Dorsolateral prefrontal cortex (tissue), 120 donors: ENCODE measurements at regions of chr15 and their contacts with region 1.

Region 1: GRCh38 chr15:88246666-88247446 is 9.7 kb downstream of the NTRK3 start:
- DNase-seq: peak; percentile 66 to 88 (median 78)
- H3K4me3 ChIP-seq: peak overlapping the region in 54 of 59 donors; percentile 6 to 57 (median 38)
- H3K27ac ChIP-seq: peak overlapping the region in 21 of 59 donors; percentile 5 to 66 (median 46)
- H3K27me3 ChIP-seq: no peaks in the 10 kb centered on the region
- CTCF ChIP-seq: peak; percentile 89 to 99 (median 97)

Region 2: DNA sequence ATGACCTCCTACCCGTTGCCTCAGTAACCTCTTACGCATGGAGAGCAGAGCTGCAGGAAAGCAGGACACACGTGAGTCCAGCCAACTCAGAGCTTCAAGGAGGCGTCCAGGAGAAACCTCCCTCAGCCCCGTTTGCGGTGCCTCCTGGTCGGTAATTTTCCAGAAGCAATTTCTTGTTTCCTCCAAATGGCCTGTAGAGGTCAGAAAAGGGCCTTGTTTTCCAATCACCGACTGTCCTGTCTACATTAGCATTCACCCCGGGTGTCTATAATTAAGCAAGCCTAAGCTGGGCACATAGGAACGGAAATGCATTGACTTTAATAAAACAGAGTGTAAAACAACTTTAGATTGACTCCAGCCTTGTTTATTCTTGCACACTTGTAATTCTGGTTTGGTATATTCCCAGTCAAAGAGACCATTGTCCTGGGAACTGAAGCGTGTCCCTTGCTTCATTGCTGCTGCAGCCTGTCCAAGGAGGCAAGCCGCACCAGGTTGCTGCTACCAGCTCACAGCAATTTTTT is 1331.0 kb before region 1 on chr15:
- intact Hi-C with region 1: loop called (anchors 5 to 10 kb)
- DNase-seq: peak in 8 of 10 donors; percentile 33 to 59 (median 42)
- H3K4me3 ChIP-seq: peak overlapping the region in 25 of 59 donors; percentile 0 to 49 (median 18)
- H3K27ac ChIP-seq: peak overlapping the region; percentile 51 to 97 (median 91)
- H3K27me3 ChIP-seq: no peaks in the 10 kb centered on the region
- CTCF ChIP-seq: peak in 55 of 56 donors; percentile 55 to 84 (median 71)

Region 3: DNA sequence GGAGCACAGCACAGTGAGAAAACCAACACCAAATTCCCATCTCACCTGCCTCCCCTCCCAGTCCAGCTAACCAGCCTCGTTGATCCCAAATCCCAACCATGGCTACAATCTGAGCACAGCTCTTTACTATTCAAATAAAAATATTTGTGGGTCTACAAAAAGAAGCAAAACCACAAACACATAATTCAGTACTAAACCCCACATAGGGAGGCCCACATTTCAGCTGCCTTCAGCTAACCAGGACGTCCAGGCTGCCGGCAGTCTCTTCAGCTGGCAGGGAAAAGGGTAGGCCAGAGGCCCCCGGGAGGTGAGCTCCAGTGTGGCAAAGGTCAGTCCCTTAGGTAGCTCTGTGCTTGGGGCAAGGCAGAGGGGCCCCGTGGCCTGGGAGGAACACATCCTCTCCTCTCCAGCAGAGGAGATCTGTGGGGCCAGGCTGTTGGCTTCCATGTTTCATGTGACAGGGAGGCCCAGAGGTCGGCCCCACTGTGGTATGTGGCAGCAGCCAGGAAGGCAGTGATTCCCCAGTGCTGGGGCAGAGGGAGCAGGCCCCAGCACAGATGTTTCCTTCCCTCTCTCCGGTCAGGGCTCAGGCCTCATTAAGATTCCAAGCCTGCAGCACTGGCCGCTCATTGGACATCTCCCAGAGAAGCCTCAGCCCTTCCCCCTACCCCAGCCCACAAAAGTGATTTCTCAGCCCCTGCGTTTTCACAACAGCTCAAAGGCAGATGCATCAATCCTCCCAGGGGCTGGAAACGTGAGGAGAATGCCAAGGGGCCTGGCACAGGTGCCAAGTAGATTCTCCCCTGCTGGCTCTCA is 371.8 kb before region 1 on chr15:
- intact Hi-C with region 1: loop called in 1 of 2 experiments (anchors 10 kb)
- DNase-seq: peak in 8 of 10 donors; percentile 12 to 53 (median 45)
- H3K4me3 ChIP-seq: no peak overlapping the region
- H3K27ac ChIP-seq: peak overlapping the region in 8 of 59 donors; percentile 7 to 59 (median 32)
- H3K27me3 ChIP-seq: no peaks in the 10 kb centered on the region
- CTCF ChIP-seq: no peak

Region 4: DNA sequence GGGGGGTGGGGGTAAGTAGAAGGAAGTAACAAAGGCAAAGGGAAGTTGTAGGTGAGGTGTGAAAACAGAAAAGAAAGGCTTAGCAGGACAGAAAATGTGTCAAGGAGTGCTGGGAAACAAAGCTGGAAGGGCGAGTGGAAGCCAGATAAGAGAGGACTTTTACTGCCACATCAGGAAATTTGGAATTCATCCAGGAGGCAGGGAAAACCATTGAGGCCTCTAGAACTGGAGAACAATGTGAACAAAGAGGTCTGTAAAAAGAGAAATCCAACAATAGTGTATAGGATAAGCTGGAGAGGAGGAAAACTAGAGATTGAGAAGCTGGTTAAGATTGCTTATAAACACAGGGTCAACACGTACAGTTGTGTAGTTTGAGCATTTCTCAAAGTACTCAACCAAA is 106.9 kb before region 1 on chr15:
- intact Hi-C with region 1: loop called in 1 of 2 experiments (anchors 10 kb)
- DNase-seq: no peak
- H3K4me3 ChIP-seq: no peak overlapping the region
- H3K27ac ChIP-seq: peak overlapping the region in 2 of 59 donors; percentile 11 to 22
- H3K27me3 ChIP-seq: no peaks in the 10 kb centered on the region
- CTCF ChIP-seq: no peak

Region 5: DNA sequence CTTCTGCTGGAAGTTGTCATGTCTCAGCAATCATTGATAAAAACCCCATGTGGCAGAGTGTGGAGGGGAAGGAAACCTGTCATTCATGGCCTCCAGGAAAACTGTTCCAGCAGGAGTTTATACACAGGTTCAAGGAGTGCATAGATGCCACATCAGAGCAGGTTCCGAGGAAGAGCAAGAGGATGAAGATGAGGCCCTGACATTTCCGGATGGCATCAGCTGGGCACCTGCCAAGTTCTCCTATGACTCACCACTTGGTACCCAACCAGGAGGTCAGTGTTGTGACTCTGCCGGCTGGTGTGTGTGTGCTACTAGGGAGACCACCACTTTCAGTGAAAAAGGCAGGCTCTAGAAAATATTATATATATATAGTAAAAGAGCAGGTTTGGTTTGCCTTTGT is 59.7 kb before region 1 on chr15:
- intact Hi-C with region 1: no loop called
- DNase-seq: peak in 6 of 10 donors; percentile 33 to 72 (median 48)
- H3K4me3 ChIP-seq: no peak overlapping the region
- H3K27ac ChIP-seq: peak overlapping the region in 1 of 59 donors; percentile 3
- H3K27me3 ChIP-seq: no peaks in the 10 kb centered on the region
- CTCF ChIP-seq: no peak

Region 6: GRCh38 chr15:88232801-88233201 is 14.1 kb before region 1 on chr15:
- intact Hi-C with region 1: no loop called
- DNase-seq: no peak
- H3K4me3 ChIP-seq: no peak overlapping the region
- H3K27ac ChIP-seq: peak overlapping the region in 7 of 59 donors; percentile 11 to 51 (median 26)
- H3K27me3 ChIP-seq: no peaks in the 10 kb centered on the region
- CTCF ChIP-seq: no peak

Region 7: DNA sequence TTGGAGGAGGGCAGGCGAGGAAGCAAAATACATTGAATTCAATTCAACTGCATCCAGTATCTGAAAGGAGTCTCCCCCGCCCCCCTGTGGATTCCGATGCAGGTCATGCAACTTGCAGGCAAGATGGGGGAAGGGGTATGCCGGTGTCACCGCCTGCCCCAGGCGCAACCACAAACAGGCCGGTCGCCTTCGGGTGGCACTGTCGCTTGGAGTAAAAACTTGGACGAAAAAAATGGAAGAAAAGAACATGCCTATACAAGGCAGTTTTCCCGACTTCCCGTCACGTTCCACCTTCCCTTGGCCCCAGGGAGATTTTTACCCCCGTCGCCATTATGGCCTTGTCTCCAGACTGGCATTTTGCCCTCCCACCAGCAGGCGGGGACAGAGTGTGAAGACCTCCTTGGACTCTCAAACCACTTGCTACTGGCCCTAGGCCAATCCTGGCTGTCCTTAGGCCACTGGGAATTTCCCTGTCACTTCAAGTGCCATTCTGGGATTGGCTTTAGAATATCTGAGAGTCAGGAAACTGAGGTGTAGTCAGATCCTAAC is 11.3 kb after region 1 on chr15:
- intact Hi-C with region 1: no loop called
- DNase-seq: peak in 8 of 10 donors; percentile 39 to 79 (median 68)
- H3K4me3 ChIP-seq: peak overlapping the region; percentile 52 to 88 (median 74)
- H3K27ac ChIP-seq: peak overlapping the region in 58 of 59 donors; percentile 17 to 97 (median 90)
- H3K27me3 ChIP-seq: peaks cover 0 to 8% (median 0%) of the 10 kb centered on the region in 45 donors
- CTCF ChIP-seq: peak in 42 of 56 donors; percentile 10 to 55 (median 37)

Region 8: GRCh38 chr15:88454867-88455810 is 208.3 kb after region 1 on chr15:
- intact Hi-C with region 1: loop called in 1 of 2 experiments (anchors 5 kb)
- DNase-seq: peak; percentile 35 to 78 (median 65)
- H3K4me3 ChIP-seq: peak overlapping the region in 3 of 59 donors; percentile 3 to 24 (median 13)
- H3K27ac ChIP-seq: peak overlapping the region in 9 of 59 donors; percentile 6 to 65 (median 28)
- H3K27me3 ChIP-seq: no peaks in the 10 kb centered on the region
- CTCF ChIP-seq: peak; percentile 31 to 83 (median 72)